Heart left ventricle (tissue), 16 donors: ENCODE measurements at regions of chr13 and their contacts with region 1.

Region 1: DNA sequence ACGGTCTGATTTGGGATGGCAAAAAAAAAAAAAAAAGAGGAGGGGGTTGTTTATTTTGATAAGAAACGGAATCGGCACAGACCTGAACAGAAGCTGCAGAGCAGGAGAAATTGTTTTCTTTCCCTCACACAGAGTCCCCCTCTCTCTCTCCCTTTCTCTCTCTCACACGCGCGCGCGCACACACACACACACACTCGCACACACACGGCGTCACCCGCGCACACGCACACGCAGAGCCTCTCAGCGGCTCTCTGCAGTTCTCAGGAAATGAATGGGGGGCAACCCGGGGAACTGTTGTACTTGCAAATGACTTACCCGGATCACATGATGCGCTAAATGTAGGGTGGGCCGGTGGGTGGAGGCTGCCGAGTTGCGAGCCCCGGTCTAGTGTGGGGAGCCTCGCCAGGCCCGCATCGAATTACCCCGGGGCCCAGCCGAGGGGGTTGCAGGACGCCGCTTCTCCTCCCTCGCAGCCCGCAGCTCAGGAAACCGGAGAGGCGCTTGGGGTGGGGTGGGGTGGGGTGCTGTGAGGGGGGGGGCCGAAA is 475 bp downstream of the KLF12 start:
- DNase-seq: peak; percentile 89 to 92 (median 89)
- ATAC-seq: peak; percentile 64 to 78 (median 74)
- H3K4me3 ChIP-seq: peak overlapping the region; percentile 69 to 97 (median 89)
- H3K27ac ChIP-seq: peak overlapping the region; percentile 92 to 99 (median 98)
- H3K4me1 ChIP-seq: peaks cover 3 to 43% (median 36%) of the 10 kb centered on the region in 12 donors
- H3K27me3 ChIP-seq: peaks cover 0 to 4% (median 0%) of the 10 kb centered on the region in 9 donors
- CTCF ChIP-seq: no peak
- POLR2A ChIP-seq: peak in 1 of 2 donors; percentile 25

Region 2: DNA sequence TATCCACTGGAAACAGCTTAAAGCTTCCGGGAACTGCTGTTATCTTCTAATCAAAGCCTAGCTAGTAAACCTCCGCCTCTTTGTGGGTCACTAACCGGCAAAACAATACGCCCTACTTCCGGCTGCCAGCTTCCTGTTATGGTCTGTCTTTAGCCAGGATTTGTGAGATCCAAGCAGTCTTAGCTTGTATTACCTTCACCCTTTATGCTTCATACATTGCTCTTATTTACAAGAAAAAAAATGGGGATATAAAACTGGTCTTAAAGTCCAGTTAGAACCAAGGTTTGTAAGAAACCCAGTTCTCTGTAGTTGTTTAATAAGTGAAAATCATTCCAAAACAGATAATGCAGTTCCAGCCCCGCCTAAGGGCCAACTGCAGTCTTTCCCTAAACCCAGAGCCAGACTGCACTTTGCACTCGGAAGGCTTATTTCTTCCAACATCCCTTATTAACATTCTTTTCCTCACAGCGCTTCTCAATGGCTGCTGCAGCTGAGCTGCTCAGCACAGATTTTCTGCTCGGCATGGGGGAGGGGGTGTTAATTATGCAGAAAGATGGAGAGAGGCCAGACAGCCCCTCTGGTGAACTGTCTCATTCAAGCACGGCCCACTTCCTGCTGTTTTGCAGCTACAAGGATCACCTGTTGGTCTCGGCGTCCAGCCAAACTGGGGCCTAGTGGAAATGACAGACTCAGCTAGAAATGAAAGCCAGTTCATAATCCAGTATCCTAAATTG is 367.9 kb before region 1 on chr13:
- intact Hi-C with region 1: loop called in 2 of 10 experiments (anchors 10 kb)
- DNase-seq: peak; percentile 86 to 93 (median 90)
- ATAC-seq: peak; percentile 68 to 88 (median 78)
- H3K4me3 ChIP-seq: peak overlapping the region in 9 of 12 donors; percentile 8 to 34 (median 22)
- H3K27ac ChIP-seq: peak overlapping the region; percentile 19 to 77 (median 66)
- H3K4me1 ChIP-seq: peaks cover 8 to 37% (median 32%) of the 10 kb centered on the region in 12 donors
- H3K27me3 ChIP-seq: no peaks in the 10 kb centered on the region
- CTCF ChIP-seq: no peak
- POLR2A ChIP-seq: no peak

Region 3: GRCh38 chr13:73945871-73946270 is 187.9 kb before region 1 on chr13:
- intact Hi-C with region 1: loop called in 5 of 10 experiments (anchors 2 to 10 kb)
- DNase-seq: peak; percentile 36 to 78 (median 59)
- ATAC-seq: peak; percentile 74 to 90 (median 88)
- H3K4me3 ChIP-seq: no peak overlapping the region
- H3K27ac ChIP-seq: peak overlapping the region in 9 of 12 donors; percentile 6 to 77 (median 50)
- H3K4me1 ChIP-seq: peaks cover 0 to 47% (median 23%) of the 10 kb centered on the region in 12 donors
- H3K27me3 ChIP-seq: no peaks in the 10 kb centered on the region
- CTCF ChIP-seq: no peak
- POLR2A ChIP-seq: no peak

Region 4: GRCh38 chr13:74062933-74063332 is 70.8 kb before region 1 on chr13:
- intact Hi-C with region 1: loop called in 6 of 10 experiments (anchors 1 to 5 kb)
- DNase-seq: peak; percentile 64 to 84 (median 75)
- ATAC-seq: peak; percentile 97 to 98 (median 97)
- H3K4me3 ChIP-seq: peak overlapping the region in 10 of 12 donors; percentile 6 to 44 (median 39)
- H3K27ac ChIP-seq: peak overlapping the region; percentile 23 to 92 (median 82)
- H3K4me1 ChIP-seq: peaks cover 0 to 74% (median 45%) of the 10 kb centered on the region in 12 donors
- H3K27me3 ChIP-seq: no peaks in the 10 kb centered on the region
- CTCF ChIP-seq: no peak
- POLR2A ChIP-seq: peak in 1 of 2 donors; percentile 15

Region 5: DNA sequence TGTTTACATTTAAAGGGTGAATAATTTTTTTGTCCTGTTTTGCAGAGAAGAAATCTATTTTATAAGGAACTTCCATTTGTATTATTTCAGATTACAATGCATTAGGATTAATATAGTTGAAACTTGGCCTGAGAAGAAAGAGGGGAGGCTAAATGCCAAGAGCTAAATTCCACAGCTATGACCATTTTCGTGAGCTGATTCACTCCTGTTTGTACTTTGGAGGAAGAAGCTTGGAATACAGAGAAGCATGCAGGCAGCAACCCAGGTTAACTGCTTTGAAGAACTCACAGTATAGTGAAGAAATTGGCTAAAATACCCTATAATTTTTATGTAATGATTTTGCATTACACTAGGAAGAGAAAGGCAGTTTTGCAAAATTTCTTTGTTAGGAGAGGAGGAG is 309.9 kb after region 1 on chr13:
- intact Hi-C with region 1: no loop called
- DNase-seq: no peak
- ATAC-seq: peak in 1 of 4 donors; percentile 31
- H3K4me3 ChIP-seq: no peak overlapping the region
- H3K27ac ChIP-seq: no peak overlapping the region
- H3K4me1 ChIP-seq: peaks cover 0 to 10% (median 1%) of the 10 kb centered on the region in 12 donors
- H3K27me3 ChIP-seq: no peaks in the 10 kb centered on the region
- CTCF ChIP-seq: no peak
- POLR2A ChIP-seq: no peak

Region 6: DNA sequence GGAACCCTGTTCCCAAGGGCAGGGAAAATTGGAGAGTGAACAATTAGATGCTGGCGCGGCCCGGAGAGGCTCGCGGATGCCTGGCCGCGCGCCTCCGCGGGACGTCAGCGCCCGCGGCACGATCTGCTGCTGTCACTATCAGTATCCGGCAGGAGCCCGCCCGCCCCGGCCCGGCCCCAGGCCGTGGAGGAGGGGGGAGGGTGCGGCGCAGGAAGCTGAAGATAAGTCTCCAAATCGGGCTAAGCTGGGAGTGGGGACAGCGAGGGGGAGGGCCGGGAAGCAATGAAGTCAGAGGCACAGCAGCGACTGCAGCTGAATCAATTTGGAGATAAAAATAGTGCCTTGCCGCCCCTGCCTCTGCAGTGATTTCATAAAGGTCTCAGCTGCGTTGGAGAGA is 442.0 kb after region 1 on chr13:
- intact Hi-C with region 1: loop called in 2 of 10 experiments (anchors 10 kb)
- DNase-seq: peak; percentile 90 to 94 (median 92)
- ATAC-seq: peak; percentile 96 to 99 (median 99)
- H3K4me3 ChIP-seq: peak overlapping the region in 11 of 12 donors; percentile 31 to 51 (median 45)
- H3K27ac ChIP-seq: peak overlapping the region in 9 of 12 donors; percentile 6 to 86 (median 73)
- H3K4me1 ChIP-seq: peaks cover 4 to 29% (median 17%) of the 10 kb centered on the region in 12 donors
- H3K27me3 ChIP-seq: no peaks in the 10 kb centered on the region
- CTCF ChIP-seq: no peak
- POLR2A ChIP-seq: peak in 1 of 2 donors; percentile 7